Activated CD4-positive, alpha-beta T cell treated with anti-CD3 and anti-CD28 coated beads for 36 hours (primary cell): ENCODE measurements at regions of chr3 and their contacts with region 1.

Region 1: DNA sequence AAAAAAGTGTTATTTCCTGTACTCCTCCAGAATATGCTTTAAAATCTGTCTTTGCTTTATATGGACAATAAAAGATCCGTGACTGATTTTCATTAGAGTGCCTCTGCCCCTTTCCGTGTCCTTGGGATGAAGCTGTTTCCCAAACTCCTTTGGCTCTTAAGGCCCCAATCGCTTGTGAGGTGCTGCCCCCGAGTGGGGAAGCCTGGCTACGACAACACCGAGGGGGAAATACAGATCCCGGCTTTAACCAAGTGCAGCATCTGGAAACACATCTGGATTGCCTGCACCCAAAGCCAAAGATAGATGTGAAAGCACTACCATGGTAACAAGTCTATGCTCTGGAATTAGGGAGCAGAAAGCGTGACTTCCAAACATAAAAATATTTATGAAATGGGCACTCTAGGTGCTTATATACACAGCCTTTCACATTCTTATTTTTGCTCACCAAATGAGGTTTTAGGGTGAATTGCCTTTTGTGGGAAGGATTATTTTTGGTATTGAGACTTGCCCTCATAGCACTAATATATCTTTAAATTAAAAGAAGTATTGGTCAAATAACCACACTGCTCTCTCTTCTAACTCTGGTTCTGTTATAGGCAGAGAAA is 40.6 kb upstream of the ADCY5 start:
- DNase-seq: peak; percentile 72
- ATAC-seq: peak; percentile 69
- H3K4me3 Mint-ChIP-seq: no peak overlapping the region
- H3K27ac Mint-ChIP-seq: no peak overlapping the region
- H3K4me1 Mint-ChIP-seq: no peaks in the 10 kb centered on the region
- H3K27me3 Mint-ChIP-seq: no peaks in the 10 kb centered on the region

Region 2: GRCh38 chr3:123328851-123329635 is 160.5 kb before region 1 on chr3:
- CTCF ChIA-PET with region 1: interaction called, 6 read pairs
- POLR2A ChIA-PET with region 1: no interaction called
- intact Hi-C with region 1: loop called (anchors 1 kb)
- DNase-seq: peak; percentile 86
- ATAC-seq: peak; percentile 90
- H3K4me3 Mint-ChIP-seq: no peak overlapping the region
- H3K27ac Mint-ChIP-seq: no peak overlapping the region
- H3K4me1 Mint-ChIP-seq: no peaks in the 10 kb centered on the region
- H3K27me3 Mint-ChIP-seq: peaks cover 3% of the 10 kb centered on the region

Region 3: DNA sequence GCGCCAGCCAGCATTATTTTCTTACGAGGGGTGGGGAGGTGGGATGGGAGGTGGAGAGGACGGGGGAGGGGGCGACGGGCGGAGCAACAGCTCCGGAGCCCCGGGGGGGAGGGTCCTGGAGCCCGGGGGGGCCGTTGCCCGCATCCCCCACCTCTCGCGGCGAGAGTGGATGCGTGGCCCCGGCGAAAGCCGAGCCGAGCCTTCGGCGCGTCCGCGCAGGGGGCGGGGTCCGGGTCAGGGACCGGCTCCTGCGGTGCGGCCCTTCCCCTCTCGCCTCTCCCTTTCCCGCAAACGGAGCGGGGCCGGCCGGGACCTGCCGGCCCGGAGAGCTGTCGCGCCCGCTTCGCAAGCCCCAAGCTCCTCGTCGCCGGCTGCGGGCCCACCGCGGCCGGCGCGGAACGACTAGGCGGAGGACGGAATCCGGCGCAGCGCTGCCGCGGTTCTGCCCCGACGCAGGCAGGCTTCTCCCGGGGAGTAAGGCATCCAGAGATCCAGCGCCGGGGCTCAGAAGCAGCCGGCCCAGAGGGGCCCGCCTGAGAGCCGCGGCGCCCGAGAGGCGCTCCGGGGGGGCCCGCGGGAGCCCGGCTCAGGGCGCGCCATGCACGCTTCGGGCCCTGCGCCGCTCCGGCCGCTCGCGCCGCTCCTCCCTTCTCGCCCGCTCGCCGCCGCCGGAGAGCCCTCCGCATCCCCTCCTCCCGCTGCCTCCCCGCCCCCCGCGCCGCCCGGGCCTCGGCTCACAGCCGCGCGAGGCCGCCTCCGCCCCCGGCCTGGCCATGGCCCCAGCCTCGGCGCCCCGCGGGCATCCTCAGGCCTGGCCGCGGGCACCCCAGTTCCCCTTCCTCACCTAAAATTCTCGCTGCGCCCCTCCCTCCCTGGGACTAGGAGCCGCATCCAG is 40.2 kb before region 1 on chr3:
- CTCF ChIA-PET with region 1: interaction called, 5 read pairs
- POLR2A ChIA-PET with region 1: no interaction called
- intact Hi-C with region 1: loop called in 1 of 2 experiments (anchors 1 kb)
- DNase-seq: peak; percentile 35
- ATAC-seq: peak; percentile 25
- H3K4me3 Mint-ChIP-seq: no peak overlapping the region
- H3K27ac Mint-ChIP-seq: no peak overlapping the region
- H3K4me1 Mint-ChIP-seq: no peaks in the 10 kb centered on the region
- H3K27me3 Mint-ChIP-seq: peaks cover 42% of the 10 kb centered on the region

Region 4: GRCh38 chr3:123859177-123859576 is 369.7 kb after region 1 on chr3:
- CTCF ChIA-PET with region 1: no interaction called
- POLR2A ChIA-PET with region 1: no interaction called
- intact Hi-C with region 1: no loop called
- DNase-seq: no peak
- ATAC-seq: no peak
- H3K4me3 Mint-ChIP-seq: no peak overlapping the region
- H3K27ac Mint-ChIP-seq: no peak overlapping the region
- H3K4me1 Mint-ChIP-seq: no peaks in the 10 kb centered on the region
- H3K27me3 Mint-ChIP-seq: no peaks in the 10 kb centered on the region